ENCODE measurements at regions of chr18 and their contacts with region 1.

Region 1: DNA sequence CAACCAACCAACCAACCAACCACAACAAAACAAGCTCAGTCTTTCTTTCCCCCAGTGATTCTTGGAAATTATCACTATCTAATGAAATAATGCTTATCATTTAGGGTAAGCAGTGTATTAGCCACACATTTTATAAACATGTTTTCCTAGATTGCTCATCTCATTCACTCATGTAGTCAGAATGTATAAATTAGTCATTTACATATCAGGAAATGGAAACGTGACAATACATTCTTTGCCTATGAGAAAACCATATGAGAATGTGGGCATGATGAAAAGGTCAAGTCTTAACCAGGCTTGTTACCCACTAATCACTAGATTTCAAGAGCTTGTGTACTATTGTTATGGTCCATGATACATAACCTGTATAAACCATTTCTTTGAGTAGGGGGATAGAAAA is 1583.4 kb upstream of the PIK3C3 start:
- DNase-seq: no peak
- H3K4me3 ChIP-seq: no peak overlapping the region
- H3K4me3 Mint-ChIP-seq: no peak overlapping the region
- H3K27ac ChIP-seq: no peak overlapping the region
- H3K27ac Mint-ChIP-seq: no peak overlapping the region
- H3K4me1 ChIP-seq: no peaks in the 10 kb centered on the region
- H3K4me1 Mint-ChIP-seq: no peaks in the 10 kb centered on the region
- H3K27me3 ChIP-seq: no peaks in the 10 kb centered on the region
- H3K27me3 Mint-ChIP-seq: peaks cover 0 to 2% (median 0%) of the 10 kb centered on the region in 3 donors
- CTCF ChIP-seq: no peak

Region 2: GRCh38 chr18:40110455-40110854 is 261.2 kb before region 1 on chr18:
- intact Hi-C with region 1: no loop called
- DNase-seq: no peak
- H3K4me3 ChIP-seq: no peak overlapping the region
- H3K4me3 Mint-ChIP-seq: no peak overlapping the region
- H3K27ac ChIP-seq: no peak overlapping the region
- H3K27ac Mint-ChIP-seq: no peak overlapping the region
- H3K4me1 ChIP-seq: no peaks in the 10 kb centered on the region
- H3K4me1 Mint-ChIP-seq: no peaks in the 10 kb centered on the region
- H3K27me3 ChIP-seq: no peaks in the 10 kb centered on the region
- H3K27me3 Mint-ChIP-seq: no peaks in the 10 kb centered on the region
- CTCF ChIP-seq: no peak

Region 3: DNA sequence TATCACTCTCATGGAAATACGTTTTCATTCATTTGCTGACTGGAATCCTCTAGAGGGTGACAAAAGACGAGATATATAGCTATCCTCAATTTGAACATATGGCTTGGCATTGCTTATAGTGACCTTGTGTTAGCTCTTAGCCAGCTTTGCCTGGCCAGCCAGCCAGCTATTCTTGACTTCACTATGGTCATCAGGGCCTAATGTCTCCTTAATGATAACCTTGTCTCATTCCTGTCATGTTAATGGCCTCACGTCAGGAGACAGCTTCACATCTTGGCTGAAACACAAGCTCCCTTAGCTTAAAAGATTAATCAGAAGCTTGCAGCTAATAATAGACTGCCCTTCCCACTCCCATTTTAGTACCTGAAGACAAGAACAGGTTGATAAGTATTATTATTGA is 65.8 kb after region 1 on chr18:
- intact Hi-C with region 1: loop called in 1 of 2 experiments (anchors 10 kb)
- DNase-seq: no peak
- H3K4me3 ChIP-seq: no peak overlapping the region
- H3K4me3 Mint-ChIP-seq: no peak overlapping the region
- H3K27ac ChIP-seq: no peak overlapping the region
- H3K27ac Mint-ChIP-seq: no peak overlapping the region
- H3K4me1 ChIP-seq: no peaks in the 10 kb centered on the region
- H3K4me1 Mint-ChIP-seq: no peaks in the 10 kb centered on the region
- H3K27me3 ChIP-seq: no peaks in the 10 kb centered on the region
- H3K27me3 Mint-ChIP-seq: peaks cover 0 to 1% (median 0%) of the 10 kb centered on the region in 3 donors
- CTCF ChIP-seq: no peak

Region 4: GRCh38 chr18:40447820-40448219 is 76.1 kb after region 1 on chr18:
- intact Hi-C with region 1: no loop called
- DNase-seq: no peak
- H3K4me3 ChIP-seq: no peak overlapping the region
- H3K4me3 Mint-ChIP-seq: no peak overlapping the region
- H3K27ac ChIP-seq: no peak overlapping the region
- H3K27ac Mint-ChIP-seq: no peak overlapping the region
- H3K4me1 ChIP-seq: no peaks in the 10 kb centered on the region
- H3K4me1 Mint-ChIP-seq: no peaks in the 10 kb centered on the region
- H3K27me3 ChIP-seq: no peaks in the 10 kb centered on the region
- H3K27me3 Mint-ChIP-seq: no peaks in the 10 kb centered on the region
- CTCF ChIP-seq: no peak